K562 (cell line): ENCODE measurements at regions of chr1 and their contacts with region 1.

Region 1: DNA sequence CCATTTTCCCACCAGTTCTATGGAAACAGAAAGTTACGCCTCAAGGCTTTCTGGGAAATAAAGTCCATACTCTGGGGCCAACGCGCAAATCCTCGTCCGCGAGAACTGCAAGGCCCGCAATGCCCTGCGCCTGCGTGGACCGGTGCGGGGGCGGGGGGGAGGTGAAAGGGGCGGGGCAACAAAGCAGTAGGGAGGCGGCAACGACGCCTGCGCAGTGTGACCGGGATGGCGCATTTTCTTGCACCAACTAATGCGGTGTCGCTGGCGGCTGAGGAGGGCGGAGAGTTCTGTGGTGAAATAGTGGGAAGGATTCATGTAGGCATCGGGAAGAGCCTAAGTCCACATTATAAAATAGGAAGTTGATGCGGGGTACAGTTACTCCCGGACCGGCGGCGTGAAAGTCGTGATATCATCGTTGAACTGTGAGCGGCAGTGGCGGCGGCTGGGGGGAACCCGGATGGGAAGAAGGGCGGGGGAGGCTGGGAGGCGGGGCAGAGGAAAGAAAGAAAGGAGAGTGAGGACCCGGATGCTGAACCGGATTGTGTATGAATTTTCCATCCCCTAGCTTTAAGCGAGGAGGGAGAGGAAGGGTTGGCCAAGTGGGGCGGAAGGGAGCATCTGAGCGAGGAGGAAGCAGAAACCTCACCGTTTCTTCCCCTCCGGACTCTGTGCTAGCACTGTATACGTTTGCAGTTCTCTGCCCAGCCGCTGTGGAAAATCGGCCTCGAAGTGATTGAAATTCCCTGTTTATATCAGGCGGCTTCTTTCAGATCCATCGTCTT is at the start of gene GGPS1:
- DNase-seq: peak; percentile 95 to 100 (median 98)
- ATAC-seq: peak; percentile 82
- H3K4me3 ChIP-seq: peak within 1 kb of the TSS; percentile 82
- H3K27ac ChIP-seq: peak within 1 kb of the TSS; percentile 97
- H3K4me1 ChIP-seq: peaks cover 12 to 13% of the 10 kb centered on the region in 2 experiments; a peak in 3 of 5 replicates
- H3K27me3 ChIP-seq: no peaks in the 10 kb centered on the region
- CTCF ChIP-seq: 0 out of 6 replicates have a peak, but pooled peaks of 2 of the 3 experiments have one; percentile 0 to 44
- EP300 ChIP-seq: no peak; the same call in 1 of the 2 replicates
- POLR2A ChIP-seq: peak; percentile 99
- RAD21 ChIP-seq: no peak; a peak in 1 of 4 replicates
- polyA plus RNA-seq, gene GGPS1: 97.8 to 104 TPM

Region 2: GRCh38 chr1:235253219-235253962 is 75.2 kb before region 1 on chr1:
- CTCF ChIA-PET with region 1: no interaction called
- POLR2A ChIA-PET with region 1: no interaction called
- in situ Hi-C with region 1: no loop called
- intact Hi-C with region 1: loop called (anchors 1 kb)
- DNase-seq: peak; percentile 23 to 83 (median 44)
- ATAC-seq: peak; percentile 100
- H3K4me3 ChIP-seq: no peak overlapping the region
- H3K27ac ChIP-seq: no peak overlapping the region
- H3K4me1 ChIP-seq: no peaks in the 10 kb centered on the region
- H3K27me3 ChIP-seq: no peaks in the 10 kb centered on the region
- CTCF ChIP-seq: peak; percentile 92 to 96 (median 93)
- EP300 ChIP-seq: no peak
- POLR2A ChIP-seq: no peak
- RAD21 ChIP-seq: peak; percentile 90 to 96

Region 3: DNA sequence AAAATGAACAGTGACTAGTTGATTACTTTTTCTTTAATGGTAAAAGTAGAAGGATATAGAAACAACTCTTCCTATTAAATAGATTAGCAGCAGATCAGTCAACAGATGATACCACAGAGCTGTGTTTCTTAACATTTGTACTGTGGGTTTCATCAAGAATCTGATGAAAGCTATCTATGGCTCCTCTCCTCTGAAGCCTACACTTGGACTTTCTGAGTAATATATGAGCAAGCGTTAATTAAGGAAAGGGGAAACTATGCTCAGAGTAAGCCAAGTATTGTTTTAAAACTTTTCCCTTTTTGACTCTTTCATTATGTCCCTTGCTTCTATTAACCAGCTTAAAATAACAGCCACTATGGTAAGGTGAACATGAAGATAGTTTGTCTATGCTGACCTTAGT is 11.4 kb before region 1 on chr1:
- CTCF ChIA-PET with region 1: no interaction called
- POLR2A ChIA-PET with region 1: interaction called, 38 read pairs
- in situ Hi-C with region 1: no loop called
- intact Hi-C with region 1: no loop called
- DNase-seq: no peak
- ATAC-seq: peak; percentile 11; the same call in 1 of the 3 replicates
- H3K4me3 ChIP-seq: no peak overlapping the region
- H3K27ac ChIP-seq: no peak overlapping the region
- H3K4me1 ChIP-seq: peaks cover 3 to 4% of the 10 kb centered on the region in 2 experiments; a peak in 3 of 5 replicates
- H3K27me3 ChIP-seq: no peaks in the 10 kb centered on the region
- CTCF ChIP-seq: no peak
- EP300 ChIP-seq: no peak
- POLR2A ChIP-seq: no peak
- RAD21 ChIP-seq: no peak

Region 4: GRCh38 chr1:235415008-235415904 is 86.7 kb after region 1 on chr1:
- CTCF ChIA-PET with region 1: interaction called, 6 read pairs
- POLR2A ChIA-PET with region 1: interaction called, 4 read pairs
- in situ Hi-C with region 1: no loop called
- intact Hi-C with region 1: loop called (anchors 2 kb)
- DNase-seq: peak; percentile 73 to 84 (median 76)
- ATAC-seq: peak; percentile 95
- H3K4me3 ChIP-seq: no peak overlapping the region
- H3K27ac ChIP-seq: no peak overlapping the region
- H3K4me1 ChIP-seq: peaks cover 0 to 2% of the 10 kb centered on the region in 2 experiments; a peak in 3 of 5 replicates
- H3K27me3 ChIP-seq: no peaks in the 10 kb centered on the region
- CTCF ChIP-seq: peak; percentile 90 to 96 (median 93)
- EP300 ChIP-seq: no peak
- POLR2A ChIP-seq: no peak
- RAD21 ChIP-seq: peak; percentile 73 to 84

Region 5: DNA sequence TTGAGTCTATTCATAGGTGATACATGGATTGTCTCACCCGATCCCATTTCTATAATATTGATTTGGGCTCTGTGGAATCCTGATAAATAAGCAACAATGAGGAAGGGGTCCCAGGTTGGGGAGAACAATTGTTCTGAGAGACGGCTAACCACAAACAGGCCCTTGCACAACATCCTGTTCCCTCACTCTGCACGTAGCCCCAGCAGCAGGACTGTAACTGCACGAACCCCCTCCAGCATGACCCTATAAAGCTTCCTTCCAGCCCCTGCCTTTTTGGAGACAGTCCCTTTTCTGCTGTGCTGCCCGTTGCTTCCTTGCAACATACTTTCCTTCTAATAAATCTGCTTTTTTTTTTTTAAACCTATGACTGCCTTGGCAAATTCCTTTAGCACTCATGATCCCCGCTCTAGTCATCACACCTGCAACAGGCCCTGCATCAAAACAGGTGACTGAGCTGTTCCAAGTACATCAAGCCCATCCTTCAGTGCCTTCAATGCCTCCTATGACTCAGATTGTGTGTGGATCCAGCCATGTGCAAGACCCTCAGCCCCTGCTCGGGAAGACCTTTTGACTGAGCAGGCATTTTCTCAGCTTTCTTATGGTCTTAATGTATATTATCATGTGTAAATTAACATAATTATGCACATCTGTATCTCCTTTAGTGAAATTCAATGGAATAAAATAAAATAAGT is 239.4 kb after region 1 on chr1:
- CTCF ChIA-PET with region 1: no interaction called
- POLR2A ChIA-PET with region 1: no interaction called
- in situ Hi-C with region 1: no loop called
- intact Hi-C with region 1: no loop called
- DNase-seq: no peak
- ATAC-seq: no peak
- H3K4me3 ChIP-seq: no peak overlapping the region
- H3K27ac ChIP-seq: no peak overlapping the region
- H3K4me1 ChIP-seq: no peaks in the 10 kb centered on the region
- H3K27me3 ChIP-seq: peaks cover 32 to 45% of the 10 kb centered on the region in 2 experiments
- CTCF ChIP-seq: no peak
- EP300 ChIP-seq: no peak
- POLR2A ChIP-seq: no peak
- RAD21 ChIP-seq: no peak